ENCODE measurements at regions of chr1 and their contacts with region 1.

Region 1: GRCh38 chr1:1399187-1399871 is at the start of gene CCNL2:
- DNase-seq: peak; percentile 96 to 99
- H3K4me3 ChIP-seq: peak within 1 kb of the TSS; percentile 99
- H3K4me1 ChIP-seq: peaks cover 13% of the 10 kb centered on the region
- H3K27me3 ChIP-seq: no peaks in the 10 kb centered on the region

Region 2: GRCh38 chr1:1231400-1232223 is 167.7 kb before region 1 on chr1 and contains the start of gene SDF4:
- in situ Hi-C with region 1: no loop called
- DNase-seq: peak; percentile 91 to 96
- H3K4me3 ChIP-seq: peak within 1 kb of the TSS; percentile 89
- H3K4me1 ChIP-seq: peaks cover 3% of the 10 kb centered on the region; the same call in 1 of the 2 replicates
- H3K27me3 ChIP-seq: no peaks in the 10 kb centered on the region

Region 3: DNA sequence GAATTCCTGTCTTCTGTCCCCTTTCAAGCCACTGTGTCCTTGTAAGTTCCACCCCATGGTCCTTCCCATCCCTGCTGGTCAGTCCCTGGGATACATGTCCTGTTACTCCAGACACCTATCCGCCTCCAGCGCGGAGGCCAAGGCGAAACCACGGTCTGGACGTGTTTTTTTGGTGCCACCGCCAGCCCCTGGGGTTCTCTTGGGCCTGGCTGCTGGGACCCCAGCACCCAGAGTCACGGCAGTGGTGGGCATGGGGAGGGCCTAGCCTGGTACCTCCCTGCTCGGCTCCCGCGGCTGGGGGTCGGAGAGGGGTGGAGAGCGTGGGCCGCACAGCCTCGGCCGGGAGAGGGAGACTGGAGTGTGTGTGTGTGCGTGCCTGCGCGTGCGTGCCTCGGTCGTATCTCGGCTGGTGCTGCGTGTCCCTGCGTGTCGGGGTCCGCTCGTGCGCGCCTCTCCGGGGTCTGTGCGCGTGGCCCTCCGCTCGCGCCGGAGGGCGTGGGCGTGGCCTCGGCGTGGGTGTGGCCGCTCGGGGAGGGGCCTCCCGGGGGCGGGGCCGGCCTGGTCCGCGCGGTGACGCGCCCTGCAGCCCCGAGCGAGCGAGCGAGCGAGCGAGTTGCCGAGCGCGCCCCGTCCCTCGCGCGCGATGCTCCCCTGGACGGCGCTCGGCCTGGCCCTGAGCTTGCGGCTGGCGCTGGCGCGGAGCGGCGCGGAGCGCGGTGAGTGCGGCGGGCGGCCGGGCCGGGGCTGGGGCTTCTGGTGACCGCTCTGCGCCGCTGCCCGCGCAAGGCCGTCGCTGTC is 36.0 kb after region 1 on chr1 and contains the start of gene VWA1:
- in situ Hi-C with region 1: loop called (anchors 5 kb)
- DNase-seq: peak; percentile 45 to 85
- H3K4me3 ChIP-seq: peak within 1 kb of the TSS; percentile 56
- H3K4me1 ChIP-seq: peaks cover 21% of the 10 kb centered on the region
- H3K27me3 ChIP-seq: no peaks in the 10 kb centered on the region

Region 4: DNA sequence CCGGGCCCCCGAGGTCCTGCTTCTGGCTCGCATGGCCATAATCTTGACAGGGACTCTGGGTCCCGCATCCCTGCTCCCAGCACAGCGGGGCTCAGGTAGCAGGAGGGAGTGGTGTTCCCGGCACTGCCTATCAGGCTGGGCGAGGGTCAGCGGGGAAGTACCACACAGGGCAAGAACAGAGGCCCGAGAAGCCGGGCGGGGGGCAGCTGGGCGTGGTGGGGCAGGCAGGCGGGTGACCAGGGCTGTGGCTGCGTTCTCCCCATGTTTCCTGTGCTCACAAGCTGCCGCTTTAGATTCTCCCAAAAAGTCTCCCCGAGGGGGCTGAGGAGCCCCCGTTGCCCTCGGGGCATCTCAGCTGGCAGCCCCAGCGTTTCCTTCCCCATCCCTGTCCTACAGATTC is 90.5 kb after region 1 on chr1:
- in situ Hi-C with region 1: loop called (anchors 10 kb)
- DNase-seq: no peak
- H3K4me3 ChIP-seq: no peak overlapping the region
- H3K4me1 ChIP-seq: no peaks in the 10 kb centered on the region
- H3K27me3 ChIP-seq: no peaks in the 10 kb centered on the region

Region 5: GRCh38 chr1:1615256-1616044 is 216.1 kb after region 1 on chr1 and contains the start of gene MIB2:
- in situ Hi-C with region 1: no loop called
- DNase-seq: peak; percentile 94 to 97
- H3K4me3 ChIP-seq: peak within 1 kb of the TSS; percentile 99
- H3K4me1 ChIP-seq: peaks cover 9% of the 10 kb centered on the region
- H3K27me3 ChIP-seq: no peaks in the 10 kb centered on the region

Region 6: DNA sequence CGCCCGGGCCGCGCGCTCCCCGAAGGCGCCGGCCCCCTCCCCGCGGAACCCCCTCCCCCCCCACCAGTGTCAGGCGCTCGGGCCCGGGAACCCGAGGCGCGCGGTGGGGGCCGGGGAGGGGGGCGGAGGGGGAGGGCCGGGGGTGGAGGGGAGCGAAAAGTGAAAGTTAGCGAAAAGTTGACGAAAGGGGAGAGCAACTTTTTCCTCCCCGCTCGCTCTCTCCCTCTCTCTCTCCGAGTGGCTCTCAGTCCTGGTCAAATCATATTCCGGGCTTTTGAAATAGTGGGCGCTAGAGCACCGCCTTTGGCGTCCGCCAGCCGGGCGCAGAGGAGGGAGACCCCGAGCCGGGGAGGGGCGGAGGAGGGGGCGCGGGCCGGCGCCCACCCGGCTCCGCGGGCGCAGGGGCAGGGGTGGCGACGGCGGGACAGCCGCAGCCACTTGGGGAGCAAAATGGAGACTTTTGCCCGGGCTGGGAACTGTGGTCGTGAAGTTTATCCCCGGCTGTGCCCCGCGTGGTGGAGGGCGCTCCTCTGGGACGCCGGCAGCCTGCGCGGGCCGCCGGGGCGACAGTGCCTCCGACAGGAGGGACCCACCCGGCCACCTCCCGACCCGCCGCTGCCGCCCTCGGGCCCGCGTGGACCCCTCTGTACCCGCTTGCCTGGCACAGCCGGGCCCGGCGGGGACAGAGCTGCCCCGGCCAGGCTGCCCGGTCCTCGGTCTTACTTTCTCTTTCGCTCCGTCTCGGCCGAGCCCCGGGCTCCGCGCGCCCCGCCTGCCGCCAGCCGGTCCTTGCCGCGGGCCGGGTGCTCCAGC is 1670.4 kb after region 1 on chr1:
- in situ Hi-C with region 1: no loop called
- DNase-seq: peak; percentile 73 to 76
- H3K4me3 ChIP-seq: peak overlapping the region; percentile 39
- H3K4me1 ChIP-seq: peaks cover 7% of the 10 kb centered on the region
- H3K27me3 ChIP-seq: no peaks in the 10 kb centered on the region